ENCODE measurements at regions of chr1 and their contacts with region 1.

Region 1: GRCh38 chr1:56409094-56409691 is 170.2 kb downstream of the PLPP3 start:
- DNase-seq: peak in 1 of 5 donors; percentile 43
- ATAC-seq: no peak
- H3K4me3 ChIP-seq: no peak overlapping the region
- H3K27ac ChIP-seq: no peak overlapping the region
- H3K4me1 ChIP-seq: peaks cover 0 to 36% (median 14%) of the 10 kb centered on the region in 12 donors
- H3K27me3 ChIP-seq: no peaks in the 10 kb centered on the region
- CTCF ChIP-seq: peak in 11 of 12 donors; percentile 19 to 40 (median 30)
- POLR2A ChIP-seq: no peak

Region 2: GRCh38 chr1:56200442-56200841 is 208.8 kb before region 1 on chr1:
- intact Hi-C with region 1: loop called in 1 of 10 experiments (anchors 2 kb)
- DNase-seq: no peak
- ATAC-seq: peak in 1 of 4 donors; percentile 48
- H3K4me3 ChIP-seq: no peak overlapping the region
- H3K27ac ChIP-seq: no peak overlapping the region
- H3K4me1 ChIP-seq: peaks cover 0 to 27% (median 15%) of the 10 kb centered on the region in 12 donors
- H3K27me3 ChIP-seq: no peaks in the 10 kb centered on the region
- CTCF ChIP-seq: no peak
- POLR2A ChIP-seq: no peak

Region 3: DNA sequence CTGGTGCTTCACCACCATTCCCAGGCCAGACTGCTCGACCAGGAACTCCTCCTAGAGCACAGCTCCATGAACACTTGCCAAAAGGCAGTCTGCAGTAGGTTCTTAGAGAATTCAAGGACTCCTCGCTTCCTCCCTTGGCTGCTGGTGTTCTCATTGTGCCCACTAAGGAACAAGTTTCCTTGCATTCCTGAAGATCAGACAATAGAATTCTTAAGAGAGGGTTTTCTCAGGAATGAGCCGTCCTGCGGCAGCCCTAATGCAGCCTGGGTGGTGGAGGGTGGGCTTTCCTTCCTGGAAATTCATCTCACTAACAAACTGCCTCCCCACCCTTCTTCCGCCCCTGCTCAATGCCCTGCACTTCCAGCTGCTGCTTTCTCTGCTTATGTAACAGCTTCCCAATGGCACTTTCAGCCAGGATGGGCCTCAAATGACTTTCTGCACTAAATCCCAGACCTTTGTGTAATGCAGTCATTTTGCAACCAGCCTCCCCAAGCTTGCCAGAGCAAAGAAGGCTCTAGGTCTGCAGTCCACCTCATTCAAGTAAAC is 117.7 kb before region 1 on chr1:
- intact Hi-C with region 1: loop called in 1 of 10 experiments (anchors 5 kb)
- DNase-seq: peak in 4 of 5 donors; percentile 33 to 74 (median 58)
- ATAC-seq: peak; percentile 29 to 90 (median 86)
- H3K4me3 ChIP-seq: no peak overlapping the region
- H3K27ac ChIP-seq: peak overlapping the region in 9 of 12 donors; percentile 28 to 69 (median 47)
- H3K4me1 ChIP-seq: peaks cover 0 to 24% (median 5%) of the 10 kb centered on the region in 12 donors
- H3K27me3 ChIP-seq: no peaks in the 10 kb centered on the region
- CTCF ChIP-seq: no peak
- POLR2A ChIP-seq: no peak

Region 4: DNA sequence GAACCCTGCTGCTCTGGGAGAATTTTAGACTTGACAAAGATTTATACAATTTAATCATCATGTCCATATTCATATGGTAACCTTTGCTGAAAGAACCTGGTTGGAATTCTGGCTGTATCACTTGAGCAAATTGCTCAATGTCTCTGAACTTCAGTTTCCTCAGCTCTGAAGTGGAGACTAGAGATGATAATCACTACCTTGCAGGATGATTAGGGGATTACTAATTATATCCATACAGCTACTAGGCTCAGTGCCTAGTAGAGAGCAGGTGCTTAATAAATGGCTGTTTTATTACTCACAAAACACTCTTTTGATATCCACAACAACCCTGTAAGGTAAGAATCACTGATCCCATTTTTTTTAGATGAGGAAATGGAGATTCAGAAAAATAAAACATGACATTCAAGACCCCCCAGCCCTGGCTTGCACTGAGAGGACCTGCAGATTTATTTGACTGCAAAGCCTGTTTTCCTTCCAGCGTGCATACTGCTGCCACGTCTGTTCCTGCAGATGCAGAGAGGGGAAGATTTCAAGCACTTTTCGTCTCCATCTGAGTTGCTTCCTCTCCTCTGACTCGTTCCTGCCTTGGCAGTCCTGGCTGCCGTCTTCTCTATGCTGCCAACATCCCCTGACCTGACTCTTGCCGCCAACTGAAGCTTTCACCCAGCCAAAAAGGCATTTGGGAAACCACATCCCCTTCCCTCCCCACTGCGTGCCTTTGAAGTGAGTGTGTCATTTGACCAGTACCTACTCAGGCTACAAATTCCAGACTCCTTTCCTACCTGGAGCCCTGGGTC is 32.8 kb before region 1 on chr1:
- intact Hi-C with region 1: loop called in 1 of 10 experiments (anchors 1 kb)
- DNase-seq: peak; percentile 37 to 66 (median 60)
- ATAC-seq: peak in 3 of 4 donors; percentile 39 to 64 (median 49)
- H3K4me3 ChIP-seq: no peak overlapping the region
- H3K27ac ChIP-seq: peak overlapping the region; percentile 18 to 78 (median 66)
- H3K4me1 ChIP-seq: peaks cover 0 to 63% (median 47%) of the 10 kb centered on the region in 12 donors
- H3K27me3 ChIP-seq: no peaks in the 10 kb centered on the region
- CTCF ChIP-seq: no peak
- POLR2A ChIP-seq: no peak

Region 5: DNA sequence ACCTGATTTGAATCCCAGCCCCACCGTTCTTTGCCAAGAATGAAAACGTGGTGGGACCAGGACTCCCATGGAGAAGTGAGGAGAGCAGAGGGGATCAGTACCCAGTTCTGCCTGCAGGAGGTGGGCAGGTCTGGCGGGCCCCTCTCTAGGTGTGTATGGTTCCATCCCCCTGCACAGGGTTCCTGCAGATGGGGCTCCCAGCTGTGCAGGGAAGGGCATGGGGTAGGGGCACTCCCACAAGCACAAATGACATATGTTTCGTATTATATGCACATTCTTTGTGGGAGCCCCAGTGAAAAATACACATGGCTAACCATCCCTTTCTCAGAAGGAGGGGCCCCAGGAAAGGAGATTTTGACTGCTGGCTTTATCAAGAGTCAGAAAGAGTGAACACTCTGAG is 25.5 kb after region 1 on chr1:
- intact Hi-C with region 1: no loop called
- DNase-seq: no peak
- ATAC-seq: no peak
- H3K4me3 ChIP-seq: no peak overlapping the region
- H3K27ac ChIP-seq: no peak overlapping the region
- H3K4me1 ChIP-seq: peaks cover 0 to 69% (median 40%) of the 10 kb centered on the region in 12 donors
- H3K27me3 ChIP-seq: no peaks in the 10 kb centered on the region
- CTCF ChIP-seq: no peak
- POLR2A ChIP-seq: no peak

Region 6: DNA sequence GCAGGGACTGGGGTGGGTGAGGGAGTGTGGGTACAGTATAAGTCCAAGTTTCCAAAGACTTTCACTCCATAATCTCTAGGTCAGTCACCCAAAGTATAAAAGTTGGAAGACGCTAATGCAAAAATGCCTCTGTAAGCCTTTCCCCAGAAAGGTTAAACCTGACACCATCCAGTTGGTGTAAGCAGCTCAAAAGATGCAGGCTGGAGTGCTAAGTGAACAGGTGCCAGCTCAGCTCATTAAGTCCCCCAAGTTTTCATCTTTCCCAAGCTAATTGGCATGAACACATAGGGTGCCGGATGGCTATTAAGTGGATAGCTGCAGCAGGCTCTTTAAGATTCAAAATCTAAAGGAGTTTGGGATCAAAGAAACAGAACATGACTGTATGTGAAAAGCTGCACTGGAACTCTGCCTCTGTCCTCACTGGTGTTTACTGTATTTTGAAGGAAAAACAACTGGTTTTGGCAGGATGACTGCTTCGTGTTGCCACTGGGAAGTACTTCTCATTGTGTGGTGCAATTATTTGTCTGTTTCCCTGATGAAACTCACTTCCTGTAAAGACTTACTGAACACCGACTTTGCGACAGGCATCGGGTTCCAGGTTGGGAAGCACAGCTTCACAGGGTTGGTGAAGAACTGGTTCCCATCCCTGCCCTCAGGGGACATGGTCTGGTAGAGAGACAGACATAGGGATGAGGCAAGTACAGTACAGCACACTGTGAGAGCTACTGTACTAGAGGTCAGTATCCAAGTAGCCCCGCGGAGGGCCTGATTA is 861.9 kb after region 1 on chr1:
- intact Hi-C with region 1: no loop called
- DNase-seq: no peak
- ATAC-seq: no peak
- H3K4me3 ChIP-seq: no peak overlapping the region
- H3K27ac ChIP-seq: no peak overlapping the region
- H3K4me1 ChIP-seq: no peaks in the 10 kb centered on the region
- H3K27me3 ChIP-seq: no peaks in the 10 kb centered on the region
- CTCF ChIP-seq: no peak
- POLR2A ChIP-seq: no peak